ENCODE measurements at regions of chr11 and their contacts with region 1.

Region 1: DNA sequence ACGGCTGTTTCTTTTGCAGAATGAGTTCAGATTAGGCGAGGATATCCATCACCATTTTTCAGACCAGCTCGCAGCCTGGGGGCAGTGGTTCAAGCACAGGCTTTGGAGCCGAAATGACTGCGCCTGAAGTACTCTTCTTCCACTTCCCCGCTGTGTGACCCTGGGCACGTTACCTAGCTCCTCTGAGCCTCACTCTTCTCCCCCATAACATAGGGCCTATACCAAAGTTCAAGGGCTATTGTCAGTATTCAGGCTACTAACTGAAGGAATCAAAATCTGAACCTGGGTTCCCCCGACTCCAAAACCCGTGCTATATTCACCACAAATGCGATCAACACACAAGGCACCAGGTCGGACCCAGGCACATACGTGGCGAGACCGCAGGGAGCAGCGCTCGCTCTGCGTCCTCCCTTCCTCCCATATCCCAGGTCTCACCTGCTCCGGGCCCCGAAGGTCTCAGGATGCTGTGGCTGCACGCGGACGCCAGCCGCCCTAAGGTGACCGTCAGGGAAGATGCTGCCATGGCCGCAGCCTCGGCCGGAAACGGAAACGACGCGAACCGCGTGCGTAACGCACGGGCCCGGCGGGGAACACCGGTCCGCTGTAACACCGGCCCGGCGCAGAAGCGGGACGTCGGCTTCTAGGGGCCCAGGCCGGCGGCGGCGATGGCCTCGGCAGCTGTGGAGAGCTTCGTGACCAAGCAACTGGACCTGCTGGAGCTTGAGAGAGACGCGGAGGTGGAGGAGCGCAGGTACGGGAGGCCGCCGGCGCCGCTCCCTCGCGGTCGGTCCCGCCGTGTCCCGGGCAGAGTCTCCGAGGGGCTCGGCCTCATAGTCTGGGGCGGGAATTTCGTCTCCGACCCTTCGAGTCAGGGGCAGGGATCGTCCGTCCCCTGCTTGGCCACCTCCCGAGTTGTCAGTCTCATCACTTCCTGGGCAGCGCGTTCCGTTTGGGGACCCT is at the starts of genes IGHMBP2 and MRPL21:
- DNase-seq: peak; percentile 96
- total RNA-seq, gene IGHMBP2: 12.3 TPM
- total RNA-seq, gene MRPL21: 58.0 TPM

Region 2: GRCh38 chr11:68532727-68533369 is 370.7 kb before region 1 on chr11:
- intact Hi-C with region 1: no loop called
- DNase-seq: no peak

Region 3: GRCh38 chr11:68806921-68807844 is 96.4 kb before region 1 on chr11:
- intact Hi-C with region 1: no loop called
- DNase-seq: no peak

Region 4: GRCh38 chr11:68843703-68844312 is 59.8 kb before region 1 on chr11:
- intact Hi-C with region 1: loop called (anchors 5 kb)
- DNase-seq: peak; percentile 93

Region 5: DNA sequence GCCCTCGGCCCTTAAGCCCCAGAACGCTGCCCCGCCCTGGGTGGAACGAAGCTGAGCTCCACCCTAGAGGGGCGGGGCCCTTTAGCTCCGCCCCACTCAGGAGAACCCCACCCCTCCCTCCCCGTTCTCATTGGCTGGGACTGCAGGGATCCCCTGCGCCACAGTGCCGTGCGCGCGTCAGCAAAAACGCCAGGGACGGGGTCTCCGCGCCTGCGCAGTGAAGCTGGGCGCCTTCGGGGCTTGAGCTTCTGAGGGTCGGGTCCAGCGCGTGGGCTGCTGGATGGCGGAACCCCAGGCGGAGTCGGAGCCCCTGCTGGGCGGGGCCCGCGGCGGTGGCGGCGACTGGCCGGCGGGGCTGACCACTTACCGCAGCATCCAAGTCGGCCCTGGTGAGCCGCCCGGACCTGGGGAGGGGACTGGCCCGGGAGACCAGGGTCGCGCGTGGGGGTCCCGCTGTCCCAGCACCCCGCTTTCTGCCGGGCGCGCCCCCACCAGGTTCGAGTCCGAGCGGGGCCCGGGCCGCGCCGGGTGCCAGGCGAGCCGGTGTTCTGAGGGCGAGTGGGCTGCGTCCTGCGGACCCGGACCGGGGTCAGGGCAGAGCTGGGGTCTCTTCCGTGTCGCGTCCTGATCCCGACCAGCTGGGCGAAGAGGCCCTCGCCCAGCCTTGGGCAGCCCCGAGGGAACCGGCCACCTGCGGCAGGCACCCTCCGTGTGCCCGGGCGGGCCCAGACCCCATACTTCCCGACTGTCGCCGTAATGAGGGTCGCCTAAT is 145.3 kb after region 1 on chr11 and contains the start of gene TPCN2:
- intact Hi-C with region 1: loop called (anchors 5 kb)
- DNase-seq: peak; percentile 95
- total RNA-seq, gene TPCN2: 12.5 TPM

Region 6: DNA sequence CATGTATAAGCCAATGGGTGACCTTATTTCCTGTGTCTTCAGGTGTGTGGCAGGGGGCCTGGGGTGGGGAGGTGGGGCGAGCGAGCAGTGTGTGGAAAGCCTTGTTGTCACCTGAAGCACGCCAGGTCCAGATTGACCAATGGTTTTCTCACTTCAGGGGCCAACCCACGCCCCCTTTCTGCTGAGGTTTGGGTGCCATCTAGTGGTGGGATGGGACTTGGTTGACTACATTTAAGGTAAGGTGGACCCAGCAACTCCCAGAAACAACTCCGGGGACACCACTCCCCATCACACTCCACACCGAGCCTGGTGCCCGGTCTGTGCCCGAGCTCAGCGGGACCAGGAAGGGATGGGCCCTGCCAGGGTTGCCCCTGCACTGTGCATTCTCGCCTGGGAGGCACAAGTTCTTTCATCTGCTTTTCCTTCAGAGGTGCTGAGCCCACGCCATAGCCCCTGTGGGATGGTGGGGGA is 185.1 kb after region 1 on chr11:
- intact Hi-C with region 1: loop called (anchors 10 kb)
- DNase-seq: no peak

Region 7: GRCh38 chr11:69642913-69643632 is 739.5 kb after region 1 on chr11:
- intact Hi-C with region 1: loop called (anchors 10 kb)
- DNase-seq: peak; percentile 89

Region 8: DNA sequence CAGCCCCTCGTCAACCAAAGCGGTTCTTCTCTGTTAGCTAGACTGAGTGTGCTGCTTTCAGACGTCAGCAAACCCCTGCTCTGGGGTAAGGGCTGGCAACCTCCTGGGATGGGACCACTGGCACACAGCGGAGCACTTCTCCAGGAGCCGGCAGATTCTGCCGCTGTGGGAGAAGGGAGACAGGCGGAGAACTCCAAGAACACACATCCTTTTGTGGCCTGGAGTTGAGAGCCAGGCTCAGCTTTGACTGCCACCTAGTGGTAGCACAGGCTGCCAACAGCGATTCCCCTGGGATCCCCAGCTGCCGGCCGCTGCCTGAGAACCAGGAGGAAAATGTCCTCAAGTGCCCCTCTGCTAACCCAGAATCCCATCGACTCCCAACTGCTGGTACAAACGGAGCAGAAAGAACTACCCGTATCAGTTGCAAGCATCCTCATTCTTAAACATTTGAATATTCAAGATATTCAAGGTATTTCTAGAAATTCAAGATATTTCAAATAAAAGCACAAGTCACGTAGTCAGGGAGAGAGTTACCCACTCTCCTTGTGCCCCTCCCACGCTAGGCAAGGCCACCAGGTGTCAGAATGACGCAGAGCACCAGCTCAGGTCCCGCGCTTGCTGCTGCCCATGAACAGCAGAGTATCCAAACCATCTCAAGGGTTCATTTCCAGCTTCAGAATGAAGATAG is 766.7 kb after region 1 on chr11:
- intact Hi-C with region 1: loop called (anchors 10 kb)
- DNase-seq: peak; percentile 91